HEK293T (cell line): ENCODE measurements at regions of chr7 and their contacts with region 1.

Region 1: DNA sequence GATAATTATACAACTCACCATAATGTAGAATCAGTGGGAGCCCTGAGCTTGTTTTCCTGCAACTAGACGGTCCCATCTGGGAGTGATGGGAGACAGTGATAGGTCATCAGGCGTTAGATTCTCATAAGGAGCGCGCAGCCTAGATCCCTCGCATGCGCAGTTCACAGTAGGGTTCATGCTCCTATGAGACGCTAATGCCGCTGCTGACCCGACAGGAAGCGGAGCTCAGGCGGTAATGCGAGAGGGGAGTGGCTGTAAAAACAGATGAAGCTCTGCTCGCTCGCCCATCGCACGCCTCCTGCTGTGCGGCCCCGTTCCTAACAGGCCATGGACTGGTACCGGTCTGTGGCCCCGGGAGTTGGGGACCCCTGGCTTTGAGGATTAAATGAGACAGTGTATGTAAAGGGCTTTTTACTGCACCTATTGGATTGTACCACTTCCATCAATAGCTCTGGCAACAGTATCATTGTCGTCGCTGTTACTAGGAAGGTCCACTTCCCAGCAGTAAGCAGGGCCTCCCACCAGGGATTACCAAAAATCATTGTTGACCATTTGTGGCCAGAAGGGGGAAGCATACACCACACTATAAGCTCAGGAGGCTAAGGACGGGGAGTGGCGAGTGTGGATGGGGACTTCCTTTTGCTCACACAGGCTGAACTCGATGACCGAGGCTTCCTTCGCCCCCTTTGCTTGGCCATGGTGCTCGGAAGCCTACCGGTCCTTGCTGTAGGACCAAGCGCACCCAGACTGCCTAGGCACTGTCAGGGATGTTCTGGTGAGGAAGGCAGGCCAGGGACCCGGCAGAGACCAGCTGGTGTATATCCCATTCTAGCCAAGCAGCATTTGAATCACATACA is 26.4 kb downstream of the AKR1B1 start:
- DNase-seq: peak; percentile 95

Region 2: GRCh38 chr7:134394046-134394445 is 38.5 kb before region 1 on chr7:
- CTCF ChIA-PET with region 1: no interaction called
- POLR2A ChIA-PET with region 1: no interaction called
- DNase-seq: no peak

Region 3: GRCh38 chr7:134458806-134459698 is 26.5 kb after region 1 on chr7 and contains the start of gene AKR1B1:
- CTCF ChIA-PET with region 1: interaction called, 15 read pairs
- POLR2A ChIA-PET with region 1: interaction called, 9 read pairs
- DNase-seq: peak; percentile 100

Region 4: GRCh38 chr7:134514663-134515062 is 82.1 kb after region 1 on chr7:
- CTCF ChIA-PET with region 1: interaction called, 26 read pairs
- POLR2A ChIA-PET with region 1: interaction called, 4 read pairs
- DNase-seq: peak; percentile 83

Region 5: GRCh38 chr7:134553976-134554375 is 121.5 kb after region 1 on chr7:
- CTCF ChIA-PET with region 1: interaction called, 26 read pairs
- POLR2A ChIA-PET with region 1: interaction called, 12 read pairs
- DNase-seq: peak; percentile 37

Region 6: GRCh38 chr7:134640842-134641715 is 208.6 kb after region 1 on chr7:
- CTCF ChIA-PET with region 1: interaction called, 10 read pairs
- POLR2A ChIA-PET with region 1: no interaction called
- DNase-seq: no peak